Activated CD4-positive, alpha-beta T cell treated with anti-CD3 and anti-CD28 coated beads, Interleukin-2, amount 10 ng/mL, durations not matched to agents 7 days and 5 days (primary cell): ENCODE measurements at regions of chr2 and their contacts with region 1.

Region 1: DNA sequence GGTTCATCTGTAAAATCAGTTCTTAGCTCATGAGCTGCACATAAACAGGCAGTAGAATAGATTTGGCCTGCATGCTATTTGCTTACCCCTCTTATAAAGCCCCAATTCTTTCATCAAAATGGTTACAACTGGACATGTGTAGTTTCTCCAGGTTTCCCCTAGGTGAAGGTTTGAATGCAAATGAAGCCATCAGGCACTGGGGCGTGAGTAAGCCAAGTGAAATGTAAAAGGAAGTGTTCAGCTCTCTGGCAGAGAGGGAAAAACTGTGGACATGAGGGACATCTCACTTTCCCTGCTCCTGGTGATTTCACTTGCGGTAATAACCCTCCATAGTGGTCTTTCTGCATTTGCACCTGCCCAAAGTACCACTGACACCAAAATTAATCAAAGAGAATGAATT is 1402.3 kb upstream of the LRRTM1 start:
- DNase-seq: no peak
- H3K4me3 Mint-ChIP-seq: no peak overlapping the region
- H3K27ac Mint-ChIP-seq: no peak overlapping the region
- H3K4me1 Mint-ChIP-seq: no peaks in the 10 kb centered on the region
- H3K27me3 Mint-ChIP-seq: no peaks in the 10 kb centered on the region

Region 2: DNA sequence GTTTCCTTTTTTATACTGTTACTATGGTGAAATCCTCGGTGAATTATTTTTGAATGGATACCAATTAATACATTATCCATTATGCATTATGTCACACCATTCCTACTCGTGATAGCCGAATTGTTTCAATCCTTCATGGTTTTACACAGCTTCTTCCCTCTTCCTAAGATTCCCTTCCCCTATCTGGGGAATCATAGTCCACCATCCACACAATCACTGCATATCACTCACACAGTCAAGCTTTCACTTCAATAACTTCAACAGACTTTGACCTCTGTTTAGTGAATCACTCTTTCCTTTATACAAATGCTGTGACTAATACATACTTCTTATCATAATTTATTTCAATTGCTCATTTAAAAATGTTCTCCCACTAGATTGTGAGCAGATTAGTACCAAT is 294.2 kb before region 1 on chr2:
- CTCF ChIA-PET with region 1: no interaction called
- POLR2A ChIA-PET with region 1: interaction called, 12 read pairs
- DNase-seq: no peak
- H3K4me3 Mint-ChIP-seq: no peak overlapping the region
- H3K27ac Mint-ChIP-seq: no peak overlapping the region
- H3K4me1 Mint-ChIP-seq: no peaks in the 10 kb centered on the region
- H3K27me3 Mint-ChIP-seq: no peaks in the 10 kb centered on the region

Region 3: GRCh38 chr2:81991282-81991681 is 284.4 kb after region 1 on chr2:
- CTCF ChIA-PET with region 1: no interaction called
- POLR2A ChIA-PET with region 1: no interaction called
- DNase-seq: no peak
- H3K4me3 Mint-ChIP-seq: no peak overlapping the region
- H3K27ac Mint-ChIP-seq: no peak overlapping the region
- H3K4me1 Mint-ChIP-seq: no peaks in the 10 kb centered on the region
- H3K27me3 Mint-ChIP-seq: no peaks in the 10 kb centered on the region